ENCODE measurements at regions of chr13 and their contacts with region 1.

Region 1: GRCh38 chr13:99046851-99047250 is 69.0 kb upstream of the DOCK9 start:
- DNase-seq: no peak
- H3K4me3 Mint-ChIP-seq: peak overlapping the region; percentile 63
- H3K27ac Mint-ChIP-seq: peak overlapping the region; percentile 92
- H3K4me1 Mint-ChIP-seq: peaks cover 94% of the 10 kb centered on the region
- H3K27me3 Mint-ChIP-seq: no peaks in the 10 kb centered on the region

Region 2: GRCh38 chr13:98772794-98773452 is 273.9 kb before region 1 on chr13:
- CTCF ChIA-PET with region 1: no interaction called
- POLR2A ChIA-PET with region 1: no interaction called
- intact Hi-C with region 1: no loop called
- DNase-seq: no peak
- H3K4me3 Mint-ChIP-seq: no peak overlapping the region
- H3K27ac Mint-ChIP-seq: no peak overlapping the region
- H3K4me1 Mint-ChIP-seq: no peaks in the 10 kb centered on the region
- H3K27me3 Mint-ChIP-seq: peaks cover 4% of the 10 kb centered on the region

Region 3: GRCh38 chr13:99075268-99076191 is 28.7 kb after region 1 on chr13:
- CTCF ChIA-PET with region 1: no interaction called
- POLR2A ChIA-PET with region 1: interaction called, 3 read pairs
- intact Hi-C with region 1: loop called (anchors 1 kb)
- DNase-seq: no peak
- H3K4me3 Mint-ChIP-seq: peak overlapping the region; percentile 47
- H3K27ac Mint-ChIP-seq: peak overlapping the region; percentile 87
- H3K4me1 Mint-ChIP-seq: peaks cover 70% of the 10 kb centered on the region
- H3K27me3 Mint-ChIP-seq: no peaks in the 10 kb centered on the region

Measured in activated CD4-positive, alpha-beta memory T cell treated with anti-CD3 and anti-CD28 coated beads for 36 hours (primary cell).